ENCODE measurements at regions of chr3 and their contacts with region 1.

Region 1: GRCh38 chr3:36868614-36869436 is 76.0 kb downstream of the TRANK1 start:
- DNase-seq: peak; percentile 67
- H3K4me3 ChIP-seq: no peak overlapping the region
- H3K27ac ChIP-seq: no peak overlapping the region
- H3K4me1 ChIP-seq: no peaks in the 10 kb centered on the region
- H3K27me3 ChIP-seq: no peaks in the 10 kb centered on the region
- CTCF ChIP-seq: peak; percentile 71 to 75
- POLR2A ChIP-seq: no peak

Region 2: DNA sequence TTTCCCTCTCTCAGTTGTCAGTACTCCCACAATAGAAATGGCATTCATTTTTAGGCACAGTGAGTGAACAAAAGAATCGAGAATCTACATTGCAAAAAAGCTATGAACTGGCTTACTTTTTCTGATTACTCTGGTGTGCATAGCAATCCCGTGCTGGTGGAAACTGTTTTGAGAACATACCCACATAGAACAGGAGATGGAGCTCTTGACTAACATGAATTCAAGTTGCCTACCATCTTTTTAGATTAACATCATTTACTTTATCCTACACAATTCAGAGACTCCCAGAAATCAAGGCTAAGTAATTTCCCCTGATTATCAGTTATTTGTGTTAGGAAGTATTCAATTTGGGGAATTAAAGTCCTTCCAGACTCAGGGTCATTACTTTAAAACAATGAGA is 902.9 kb before region 1 on chr3:
- CTCF ChIA-PET with region 1: interaction called, 32 read pairs
- POLR2A ChIA-PET with region 1: no interaction called
- dilution Hi-C with region 1: no loop called
- intact Hi-C with region 1: loop called (anchors 2 kb)
- DNase-seq: peak; percentile 38
- H3K4me3 ChIP-seq: no peak overlapping the region
- H3K27ac ChIP-seq: no peak overlapping the region
- H3K4me1 ChIP-seq: no peaks in the 10 kb centered on the region
- H3K27me3 ChIP-seq: peaks cover 2 to 7% of the 10 kb centered on the region in 2 experiments
- CTCF ChIP-seq: peak; percentile 17 to 23
- POLR2A ChIP-seq: no peak

Region 3: GRCh38 chr3:36514171-36514570 is 354.7 kb before region 1 on chr3:
- CTCF ChIA-PET with region 1: no interaction called
- POLR2A ChIA-PET with region 1: no interaction called
- dilution Hi-C with region 1: no loop called
- intact Hi-C with region 1: no loop called
- DNase-seq: no peak
- H3K4me3 ChIP-seq: no peak overlapping the region
- H3K27ac ChIP-seq: no peak overlapping the region
- H3K4me1 ChIP-seq: no peaks in the 10 kb centered on the region
- H3K27me3 ChIP-seq: no peaks in the 10 kb centered on the region
- CTCF ChIP-seq: no peak
- POLR2A ChIP-seq: no peak

Region 4: DNA sequence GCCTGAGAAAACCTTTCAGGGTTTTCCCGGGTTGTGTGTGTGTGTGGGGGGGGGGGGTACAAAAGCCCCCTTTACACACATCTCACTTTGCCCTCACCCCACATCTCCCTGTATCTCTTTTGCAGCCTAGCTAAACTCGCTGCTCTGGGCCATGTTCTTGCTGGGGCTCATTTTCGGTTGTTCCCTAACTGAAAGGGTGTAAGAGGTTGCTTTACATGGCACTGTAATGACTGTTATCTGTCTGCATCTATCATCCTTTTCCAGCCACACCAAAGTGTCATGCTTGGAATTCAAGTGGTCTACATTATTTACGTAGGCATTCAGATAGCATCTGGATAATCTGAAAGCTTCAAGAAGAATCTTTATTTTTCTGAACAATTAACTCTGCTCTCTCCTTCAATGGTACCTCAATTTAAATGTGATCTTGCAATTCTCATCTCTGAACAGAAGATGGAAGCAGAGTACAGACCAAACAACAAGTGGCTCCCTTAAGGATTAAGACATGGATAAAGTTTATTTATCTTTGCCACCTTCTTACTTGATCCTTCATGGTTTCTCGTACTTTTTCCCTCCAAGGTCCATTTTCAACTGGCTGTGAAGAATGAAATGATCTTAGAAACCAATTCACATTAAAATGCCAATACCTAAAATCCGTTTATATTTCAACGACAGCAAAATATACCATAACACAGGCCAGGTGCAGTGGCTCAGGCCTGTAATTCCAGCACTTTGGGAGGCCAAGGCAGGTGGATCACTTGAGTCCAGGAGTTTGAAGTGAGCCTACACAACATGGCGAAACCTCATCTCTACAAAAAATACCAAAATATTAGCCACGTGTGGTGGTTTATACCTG is 139.4 kb before region 1 on chr3:
- CTCF ChIA-PET with region 1: interaction called, 14 read pairs
- POLR2A ChIA-PET with region 1: no interaction called
- dilution Hi-C with region 1: no loop called
- intact Hi-C with region 1: loop called (anchors 1 kb)
- DNase-seq: peak; percentile 50
- H3K4me3 ChIP-seq: no peak overlapping the region
- H3K27ac ChIP-seq: no peak overlapping the region
- H3K4me1 ChIP-seq: no peaks in the 10 kb centered on the region
- H3K27me3 ChIP-seq: no peaks in the 10 kb centered on the region
- CTCF ChIP-seq: peak; percentile 36 to 43
- POLR2A ChIP-seq: no peak

Region 5: DNA sequence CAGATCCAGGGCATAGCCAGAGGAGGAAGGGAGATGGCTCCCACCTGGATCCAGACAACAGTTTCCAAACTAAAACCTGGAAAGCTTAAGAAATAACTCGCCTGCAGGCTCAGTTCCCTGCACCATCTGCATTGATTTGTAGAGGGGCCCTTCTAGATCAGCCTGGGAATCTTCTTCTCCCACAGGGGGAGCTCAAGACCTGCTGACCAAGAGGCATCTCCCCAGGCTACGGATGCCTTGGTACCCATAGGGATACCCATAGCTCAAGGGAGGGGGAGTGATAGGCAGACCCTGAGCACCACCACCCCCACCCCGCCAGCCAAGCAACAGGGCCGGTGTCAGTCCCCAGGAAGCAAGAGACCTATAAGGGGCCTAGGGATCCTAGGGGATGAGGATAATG is 76.5 kb before region 1 on chr3:
- CTCF ChIA-PET with region 1: interaction called, 24 read pairs
- POLR2A ChIA-PET with region 1: no interaction called
- dilution Hi-C with region 1: no loop called
- intact Hi-C with region 1: loop called (anchors 1 kb)
- DNase-seq: peak; percentile 26
- H3K4me3 ChIP-seq: no peak overlapping the region
- H3K27ac ChIP-seq: no peak overlapping the region
- H3K4me1 ChIP-seq: no peaks in the 10 kb centered on the region
- H3K27me3 ChIP-seq: peaks cover 0 to 6% of the 10 kb centered on the region in 2 experiments
- CTCF ChIP-seq: peak; percentile 27 to 49
- POLR2A ChIP-seq: no peak

Region 6: DNA sequence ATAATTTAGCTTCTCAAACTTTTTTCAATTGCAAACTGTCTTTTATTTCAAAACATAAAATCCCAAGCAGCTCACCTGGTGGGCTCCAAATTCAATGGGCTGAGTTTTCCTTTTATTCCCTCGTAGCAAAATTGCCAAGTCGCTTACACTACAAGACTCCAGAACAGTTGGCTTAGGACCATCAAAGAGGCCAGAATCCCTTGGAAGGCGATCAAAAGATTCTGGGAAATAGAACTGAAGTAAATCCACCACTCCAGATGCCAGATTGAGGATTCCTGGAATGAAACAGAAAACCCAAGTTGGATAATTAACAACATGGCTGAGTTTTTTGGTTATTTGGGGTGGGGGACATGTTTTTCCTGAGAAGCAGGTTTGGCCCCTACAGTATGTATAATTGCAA is 16.8 kb before region 1 on chr3:
- CTCF ChIA-PET with region 1: interaction called, 21 read pairs
- POLR2A ChIA-PET with region 1: no interaction called
- dilution Hi-C with region 1: no loop called
- intact Hi-C with region 1: no loop called
- DNase-seq: no peak
- H3K4me3 ChIP-seq: no peak overlapping the region
- H3K27ac ChIP-seq: no peak overlapping the region
- H3K4me1 ChIP-seq: no peaks in the 10 kb centered on the region
- H3K27me3 ChIP-seq: no peaks in the 10 kb centered on the region
- CTCF ChIP-seq: no peak
- POLR2A ChIP-seq: no peak

Region 7: GRCh38 chr3:37210230-37210629 is 341.4 kb after region 1 on chr3:
- CTCF ChIA-PET with region 1: no interaction called
- POLR2A ChIA-PET with region 1: no interaction called
- dilution Hi-C with region 1: no loop called
- intact Hi-C with region 1: loop called (anchors 2 kb)
- DNase-seq: no peak
- H3K4me3 ChIP-seq: no peak overlapping the region
- H3K27ac ChIP-seq: no peak overlapping the region
- H3K4me1 ChIP-seq: no peaks in the 10 kb centered on the region
- H3K27me3 ChIP-seq: no peaks in the 10 kb centered on the region
- CTCF ChIP-seq: no peak
- POLR2A ChIP-seq: no peak

Measured in endothelial cell of umbilical vein (primary cell).